ENCODE measurements at regions of chr12 and their contacts with region 1.

Region 1: DNA sequence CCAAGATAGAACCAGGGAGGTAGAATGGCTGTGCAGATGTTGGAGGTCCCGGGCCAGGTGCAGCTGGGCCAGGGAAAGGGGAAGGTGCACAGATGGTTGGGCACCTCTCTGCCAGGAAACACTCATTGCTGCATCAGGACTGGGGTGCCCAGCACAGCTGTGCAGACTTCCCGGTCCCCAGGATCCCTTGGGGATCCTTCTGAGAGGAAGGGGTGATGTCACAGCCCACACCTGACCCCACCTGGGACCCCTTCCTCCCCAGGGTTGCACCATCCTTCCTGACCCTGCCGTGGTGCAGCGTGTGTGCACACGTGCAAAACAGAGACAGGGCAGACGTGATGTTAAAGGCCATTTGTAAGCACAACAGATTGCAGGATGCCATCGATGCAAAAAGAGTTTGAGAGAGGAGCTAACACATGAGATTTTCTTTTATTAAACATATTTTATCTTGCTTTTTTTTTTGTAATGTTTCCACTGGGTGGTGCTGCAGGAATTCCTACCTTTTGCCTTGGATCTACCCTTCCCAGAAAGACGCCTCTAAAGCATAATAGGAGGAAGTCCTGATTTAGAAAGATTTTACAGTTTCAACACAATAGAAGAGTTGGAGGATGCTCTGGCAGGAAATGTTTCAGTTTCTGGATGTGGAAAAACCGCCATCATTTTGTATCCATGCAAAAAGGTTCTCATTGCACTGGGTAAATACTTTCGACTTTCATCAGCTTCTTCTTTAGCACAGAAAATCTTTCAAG is 14.8 kb downstream of the ELK3 start:
- DNase-seq: peak in 1 of 9 experiments; percentile 48
- ATAC-seq: no peak
- H3K4me3 ChIP-seq: no peak overlapping the region
- H3K4me3 Mint-ChIP-seq: peak overlapping the region; percentile 30
- H3K27ac ChIP-seq: no peak overlapping the region
- H3K27ac Mint-ChIP-seq: peak overlapping the region; percentile 6
- H3K4me1 ChIP-seq: peaks cover 84% of the 10 kb centered on the region
- H3K4me1 Mint-ChIP-seq: peaks cover 93% of the 10 kb centered on the region
- H3K27me3 ChIP-seq: no peaks in the 10 kb centered on the region
- H3K27me3 Mint-ChIP-seq: no peaks in the 10 kb centered on the region
- CTCF ChIP-seq: no peak

Region 2: DNA sequence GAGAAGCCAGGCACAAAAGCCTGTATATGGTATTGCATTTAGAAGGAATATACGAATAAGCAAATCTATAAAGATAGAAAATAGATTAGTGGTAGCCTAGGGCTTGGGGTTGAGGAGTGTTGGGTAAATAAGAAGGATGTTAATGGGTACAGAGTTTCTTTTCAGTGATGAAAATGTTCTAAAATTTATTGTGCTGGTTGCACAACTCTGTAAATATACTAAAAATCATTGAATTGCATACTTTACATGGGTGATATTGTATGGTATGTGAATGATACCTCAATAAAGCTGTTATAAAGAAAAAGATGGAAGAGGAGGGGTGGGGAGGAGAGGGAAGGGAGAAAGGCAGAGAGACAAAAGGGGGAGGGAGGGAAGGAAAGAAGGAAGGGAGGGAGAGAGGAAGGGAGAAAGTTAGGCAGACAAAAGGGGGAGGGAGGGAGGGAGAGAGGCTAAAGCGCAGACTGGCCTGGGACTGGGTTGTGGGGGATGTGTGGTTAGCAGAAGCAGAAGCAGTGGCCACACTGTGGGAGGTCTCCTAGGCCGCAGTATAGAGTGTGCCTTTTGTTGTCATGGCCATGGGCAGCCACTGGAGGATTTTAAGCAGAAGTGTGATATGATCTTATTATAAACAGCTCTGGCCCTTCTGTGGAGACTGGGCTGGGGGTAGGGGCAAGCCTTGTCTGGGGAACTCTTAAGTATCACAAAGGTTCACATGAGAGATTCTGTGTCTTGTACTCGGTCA is 88.4 kb before region 1 on chr12:
- CTCF ChIA-PET with region 1: interaction called, 3 read pairs
- POLR2A ChIA-PET with region 1: no interaction called
- intact Hi-C with region 1: loop called in 1 of 2 experiments (anchors 5 kb)
- DNase-seq: peak in 2 of 9 experiments; percentile 8 to 18
- ATAC-seq: no peak
- H3K4me3 ChIP-seq: no peak overlapping the region
- H3K4me3 Mint-ChIP-seq: no peak overlapping the region
- H3K27ac ChIP-seq: no peak overlapping the region
- H3K27ac Mint-ChIP-seq: no peak overlapping the region
- H3K4me1 ChIP-seq: no peaks in the 10 kb centered on the region
- H3K4me1 Mint-ChIP-seq: peaks cover 6% of the 10 kb centered on the region
- H3K27me3 ChIP-seq: no peaks in the 10 kb centered on the region
- H3K27me3 Mint-ChIP-seq: peaks cover 1% of the 10 kb centered on the region
- CTCF ChIP-seq: no peak

Region 3: DNA sequence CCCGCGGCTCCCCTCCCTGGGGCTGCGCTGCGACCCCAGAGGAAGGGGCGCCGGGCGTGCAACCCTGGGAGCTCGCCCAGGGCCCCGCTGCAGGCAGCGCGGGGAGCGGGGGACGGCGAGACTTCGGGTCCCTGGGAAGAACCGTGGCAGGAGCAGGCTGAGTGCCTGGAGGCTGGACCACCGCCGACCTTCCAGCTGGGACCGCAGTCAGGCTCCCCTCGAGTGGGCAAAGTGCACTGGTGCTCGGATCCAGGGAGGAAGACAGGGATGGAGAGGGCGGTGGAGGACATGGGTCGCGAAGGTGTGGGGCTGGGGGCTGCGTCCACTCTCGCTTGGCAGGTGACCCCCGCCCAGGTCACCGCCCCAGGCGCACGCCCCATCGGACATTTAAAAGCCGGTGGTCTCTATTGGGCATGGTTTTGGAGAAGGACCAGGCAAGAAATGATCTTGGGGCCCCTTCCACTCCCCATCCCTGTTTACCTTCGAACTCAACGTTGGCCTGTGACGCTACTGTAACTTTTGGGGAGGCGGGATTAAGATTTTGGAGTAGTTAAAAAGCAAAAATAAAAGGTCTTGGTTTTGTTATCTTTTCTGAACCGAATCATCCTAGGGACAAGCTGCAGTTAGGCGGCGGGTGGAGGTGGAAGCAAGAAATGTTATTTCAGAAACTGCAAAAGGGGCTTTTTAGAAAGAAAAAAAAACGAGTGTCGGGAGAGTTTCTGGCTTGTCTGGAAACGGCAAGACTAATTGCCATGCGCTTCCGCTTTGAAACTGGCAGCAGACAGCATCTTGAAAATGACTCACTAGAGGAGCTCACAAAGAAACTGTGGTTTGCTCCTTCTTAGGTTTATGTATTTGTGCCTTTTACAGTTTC is 13.8 kb before region 1 on chr12:
- CTCF ChIA-PET with region 1: interaction called, 11 read pairs
- POLR2A ChIA-PET with region 1: interaction called, 10 read pairs
- intact Hi-C with region 1: loop called (anchors 1 to 2 kb)
- DNase-seq: peak; percentile 37 to 93 (median 73)
- ATAC-seq: peak; percentile 70
- H3K4me3 ChIP-seq: peak overlapping the region; percentile 87 to 95
- H3K4me3 Mint-ChIP-seq: peak overlapping the region; percentile 94
- H3K27ac ChIP-seq: peak overlapping the region; percentile 74 to 77
- H3K27ac Mint-ChIP-seq: peak overlapping the region; percentile 97
- H3K4me1 ChIP-seq: peaks cover 43% of the 10 kb centered on the region
- H3K4me1 Mint-ChIP-seq: peaks cover 64% of the 10 kb centered on the region
- H3K27me3 ChIP-seq: no peaks in the 10 kb centered on the region
- H3K27me3 Mint-ChIP-seq: no peaks in the 10 kb centered on the region
- CTCF ChIP-seq: no peak

Measured in CD8-positive, alpha-beta T cell (primary cell).